Cardiac septum (tissue), 1 donor: ENCODE measurements at regions of chr2 and their contacts with region 1.

Region 1: DNA sequence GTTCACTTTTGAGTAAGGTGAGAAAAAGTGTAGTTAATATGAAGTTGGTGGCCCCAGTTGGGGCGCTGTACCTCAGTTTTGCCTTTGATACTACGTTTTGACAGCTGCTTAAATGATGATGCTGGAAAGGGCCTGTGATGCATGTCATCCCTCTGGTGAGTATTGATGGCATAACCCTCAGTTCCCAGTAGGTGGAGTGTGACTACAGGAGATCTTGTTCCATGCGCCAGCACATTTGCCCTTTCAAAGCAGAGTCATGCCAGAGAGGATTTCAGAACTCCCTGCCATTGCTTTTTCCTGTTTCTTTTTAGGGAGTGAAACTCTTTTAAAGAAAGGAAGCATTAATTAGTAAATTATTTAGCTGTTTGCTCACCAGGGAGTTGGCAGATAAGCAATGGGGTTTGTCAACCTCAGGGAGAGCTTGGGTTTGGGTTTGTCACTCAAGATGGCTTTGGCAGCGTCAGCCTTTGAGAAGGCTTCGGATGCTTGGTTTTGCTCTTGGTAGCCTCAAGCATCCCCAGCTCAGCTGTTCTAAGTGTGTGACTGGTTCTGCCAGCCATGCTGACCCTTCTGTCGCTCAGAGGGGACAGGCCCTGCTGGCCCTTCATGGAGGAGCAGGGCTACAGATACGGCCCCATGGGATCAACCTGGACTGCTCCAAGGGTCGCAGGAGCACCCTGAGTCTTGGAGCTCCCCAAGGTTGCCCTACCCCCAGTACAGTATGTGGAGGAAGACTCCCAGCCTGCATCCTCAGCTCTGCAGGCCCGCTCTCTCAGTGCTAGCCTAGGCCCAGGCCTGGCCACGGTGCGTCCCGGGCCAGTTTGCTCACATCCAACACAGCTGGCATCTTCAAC is 29.1 kb downstream of the ARMC9 start:
- DNase-seq: peak; percentile 70

Region 2: DNA sequence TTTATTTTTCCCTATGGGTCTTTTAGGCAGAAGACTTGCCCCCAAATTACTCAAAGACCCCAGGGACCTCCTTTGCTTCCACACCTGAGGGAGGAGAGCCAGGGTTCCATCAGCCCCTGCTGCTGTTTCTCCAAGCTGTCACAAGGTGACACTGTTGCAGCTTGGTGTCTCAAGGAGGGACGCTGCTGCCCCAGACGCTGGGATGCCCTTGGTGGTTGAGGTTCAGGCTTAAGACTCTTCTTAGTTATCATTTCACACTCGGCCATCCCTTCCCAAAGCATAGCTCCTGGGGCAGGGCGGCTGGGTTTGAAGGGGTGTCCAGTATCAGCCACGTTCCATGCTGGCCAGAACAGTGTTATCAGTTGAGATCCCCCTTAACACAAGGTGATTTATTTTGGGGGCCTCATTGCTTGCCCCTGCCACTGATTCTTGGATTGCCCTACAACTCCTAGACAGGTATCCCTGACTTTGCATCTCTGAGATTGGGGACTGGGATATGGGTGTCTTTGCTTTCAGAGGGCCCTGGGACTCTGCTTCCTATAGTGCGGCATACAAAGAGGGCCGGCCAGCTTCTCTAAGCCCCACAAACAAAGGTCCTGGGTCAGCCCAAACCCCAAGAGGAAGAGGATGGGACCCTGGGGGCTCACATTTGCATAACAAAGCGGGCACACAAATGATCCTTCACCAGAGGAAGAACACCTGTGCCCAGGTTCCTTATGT is 325.2 kb before region 1 on chr2:
- intact Hi-C with region 1: no loop called
- DNase-seq: peak; percentile 51

Region 3: GRCh38 chr2:231241755-231242507 is 14.4 kb after region 1 on chr2:
- intact Hi-C with region 1: no loop called
- DNase-seq: no peak

Region 4: DNA sequence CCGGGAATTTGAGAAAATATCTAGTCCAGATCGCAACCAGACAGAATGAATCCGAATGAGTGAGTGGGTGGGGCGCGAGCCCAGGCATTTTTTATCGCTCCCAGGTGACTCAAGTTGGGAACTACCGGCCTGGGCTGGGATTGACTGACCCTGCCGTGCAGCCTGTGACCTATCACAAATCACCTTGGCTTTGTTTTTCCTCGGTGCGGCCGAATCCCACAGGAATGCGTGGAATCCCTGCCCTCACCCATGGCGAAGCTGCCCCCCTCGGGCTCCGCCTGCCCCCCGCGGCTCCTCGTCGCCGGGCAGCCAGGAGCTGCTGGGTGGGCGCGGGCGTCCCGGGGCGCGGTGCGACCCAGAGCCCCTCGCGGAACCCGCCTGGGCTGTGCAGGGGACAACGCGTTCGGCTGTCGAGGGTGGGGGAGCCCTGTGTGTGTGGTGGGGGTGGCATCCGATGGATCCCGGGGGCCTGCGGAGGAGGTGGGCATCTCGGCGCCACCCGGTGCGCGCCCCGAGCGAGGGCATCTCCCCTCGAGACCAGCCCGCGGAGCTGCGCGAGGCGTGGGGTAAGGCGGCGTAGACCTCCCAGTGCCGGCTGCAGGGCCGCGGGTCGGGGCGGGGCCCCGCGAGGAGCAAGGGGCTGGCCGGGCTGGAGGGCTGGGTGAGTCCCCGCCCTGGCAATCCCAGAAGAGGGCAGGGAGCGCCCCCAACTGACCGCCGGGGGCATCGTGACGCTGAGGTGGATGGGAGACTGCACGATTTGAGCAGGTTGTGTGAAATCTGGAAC is 184.5 kb after region 1 on chr2:
- intact Hi-C with region 1: loop called (anchors 2 kb)
- DNase-seq: peak; percentile 87

Region 5: DNA sequence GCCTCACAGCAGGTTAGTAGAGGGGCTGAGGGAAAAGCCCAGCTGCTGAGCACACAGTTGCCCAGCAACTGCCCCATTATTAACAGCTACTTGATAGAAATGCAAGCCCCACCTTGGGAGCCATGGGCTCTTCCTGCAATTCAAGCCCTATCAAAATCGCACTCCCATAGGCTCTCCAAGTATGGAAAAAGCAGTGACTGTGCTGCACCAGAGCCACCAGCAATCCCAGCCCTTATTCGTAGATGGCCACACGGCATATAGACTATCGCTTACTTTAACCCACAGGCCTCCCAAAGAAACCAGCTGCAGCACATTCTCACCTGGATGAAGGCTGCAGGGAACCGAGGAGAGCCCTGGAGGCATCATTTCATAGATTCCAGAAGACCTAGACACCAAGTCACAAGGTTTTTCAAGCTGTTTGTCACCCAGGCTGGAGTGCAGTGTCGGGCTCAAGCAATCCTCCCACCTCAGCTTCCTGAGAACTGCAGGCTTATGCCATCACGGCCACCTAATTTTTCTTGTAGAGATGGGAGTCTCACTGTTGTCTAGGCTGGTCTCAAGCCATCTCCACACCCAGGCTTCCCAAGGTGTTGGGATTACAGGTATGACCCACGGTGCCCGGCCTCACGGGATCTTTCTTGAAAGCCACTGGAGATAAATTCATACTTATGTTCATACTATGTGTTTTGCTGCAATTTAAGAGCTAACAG is 225.4 kb after region 1 on chr2:
- intact Hi-C with region 1: loop called (anchors 2 kb)
- DNase-seq: no peak

Region 6: DNA sequence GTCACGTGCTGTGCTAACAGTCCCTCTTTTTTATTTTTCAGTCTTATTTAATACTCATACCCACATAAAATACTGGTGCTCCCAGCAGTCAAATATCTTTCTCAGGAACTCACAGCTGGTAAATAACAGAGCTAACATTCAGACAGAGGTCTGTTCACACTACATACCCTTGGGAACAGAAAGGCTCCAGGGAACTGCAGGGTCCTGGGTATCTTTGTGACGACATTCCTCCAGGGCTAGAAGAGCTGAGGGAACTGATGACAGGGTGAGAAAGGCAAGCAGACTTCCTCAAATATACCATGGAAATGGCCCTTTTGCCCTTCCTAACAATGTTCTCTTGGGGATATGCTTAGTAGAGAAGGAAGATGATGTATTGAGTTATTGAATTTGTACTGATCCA is 534.2 kb after region 1 on chr2:
- intact Hi-C with region 1: no loop called
- DNase-seq: no peak